HEK293 (cell line): ENCODE measurements at regions of chr17 and their contacts with region 1.

Region 1: GRCh38 chr17:35981908-35982330 is 622 bp upstream of the CCL16 start:
- H3K4me3 ChIP-seq: no peak overlapping the region
- H3K27ac ChIP-seq: no peak overlapping the region
- H3K4me1 ChIP-seq: no peaks in the 10 kb centered on the region
- CTCF ChIP-seq: no peak

Region 2: GRCh38 chr17:36001862-36002603 is 20.1 kb after region 1 on chr17:
- CTCF ChIA-PET with region 1: interaction called, 13 read pairs
- POLR2A ChIA-PET with region 1: no interaction called
- H3K4me3 ChIP-seq: no peak overlapping the region
- H3K27ac ChIP-seq: no peak overlapping the region
- H3K4me1 ChIP-seq: 0 out of 2 replicates have a peak, but pooled peaks cover 4% of the 10 kb centered on the region
- CTCF ChIP-seq: no peak

Region 3: DNA sequence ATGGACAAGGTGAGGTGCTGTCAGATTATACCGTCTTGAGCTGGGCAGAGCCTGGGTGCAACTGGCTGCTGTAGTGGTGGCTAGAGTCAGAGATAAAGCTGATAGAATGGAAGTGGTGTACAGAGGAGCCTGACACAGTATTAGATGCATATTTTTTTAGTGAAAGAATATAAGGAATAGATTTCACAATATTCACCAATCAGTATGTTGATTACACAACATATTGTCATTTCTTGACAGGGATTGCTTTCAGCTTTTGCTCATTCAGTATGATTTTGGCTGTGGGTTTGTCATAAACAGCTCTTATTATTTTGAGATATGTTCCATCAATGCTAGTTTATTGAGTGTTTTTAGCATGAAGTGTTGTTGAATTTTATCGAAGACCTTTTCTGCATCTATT is 37.5 kb after region 1 on chr17:
- CTCF ChIA-PET with region 1: no interaction called
- POLR2A ChIA-PET with region 1: no interaction called
- H3K4me3 ChIP-seq: no peak overlapping the region
- H3K27ac ChIP-seq: no peak overlapping the region
- H3K4me1 ChIP-seq: no peaks in the 10 kb centered on the region
- CTCF ChIP-seq: no peak

Region 4: DNA sequence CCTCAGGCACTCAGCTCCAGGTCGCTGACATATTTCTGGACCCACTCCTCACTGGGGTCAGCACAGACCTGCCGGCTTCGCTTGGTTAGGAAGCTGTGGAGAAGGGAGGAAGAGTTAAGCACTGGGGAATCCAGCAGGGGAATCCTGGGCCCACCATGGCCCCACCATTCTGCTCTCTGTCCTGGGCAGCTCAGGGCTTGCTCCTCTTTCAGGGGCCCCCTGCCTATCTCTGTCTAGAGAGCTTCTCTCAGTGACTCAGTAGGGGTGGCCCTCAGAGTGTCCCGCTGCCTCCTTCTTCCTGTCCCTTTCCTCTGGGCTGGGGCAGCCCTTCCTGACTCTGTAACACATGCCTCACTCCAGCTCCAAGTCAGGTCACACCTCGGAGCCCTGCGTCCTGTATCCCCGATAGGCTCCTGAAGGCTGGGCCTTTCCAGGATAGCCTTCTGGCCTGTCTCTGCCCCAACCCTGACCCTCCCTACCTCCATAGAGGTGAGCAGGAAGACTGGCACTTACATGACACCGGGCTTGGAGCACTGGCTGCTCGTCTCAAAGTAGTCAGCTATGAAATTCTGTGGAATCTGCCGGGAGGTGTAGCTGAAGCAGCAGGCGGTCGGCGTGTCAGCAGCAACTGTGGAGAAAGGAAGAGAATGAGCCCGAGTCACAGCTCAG is 106.9 kb after region 1 on chr17:
- CTCF ChIA-PET with region 1: no interaction called
- POLR2A ChIA-PET with region 1: no interaction called
- H3K4me3 ChIP-seq: no peak overlapping the region
- H3K27ac ChIP-seq: no peak overlapping the region
- H3K4me1 ChIP-seq: no peaks in the 10 kb centered on the region
- CTCF ChIP-seq: no peak

Region 5: GRCh38 chr17:36486204-36487194 is 504.6 kb after region 1 on chr17 and contains the start of gene ZNHIT3:
- CTCF ChIA-PET with region 1: interaction called, 12 read pairs
- POLR2A ChIA-PET with region 1: interaction called, 3 read pairs
- H3K4me3 ChIP-seq: peak within 1 kb of the TSS; percentile 94
- H3K27ac ChIP-seq: peak within 1 kb of the TSS; percentile 64
- H3K4me1 ChIP-seq: no peaks in the 10 kb centered on the region
- CTCF ChIP-seq: no peak